ENCODE measurements at regions of chr20 and their contacts with region 1.

Region 1: DNA sequence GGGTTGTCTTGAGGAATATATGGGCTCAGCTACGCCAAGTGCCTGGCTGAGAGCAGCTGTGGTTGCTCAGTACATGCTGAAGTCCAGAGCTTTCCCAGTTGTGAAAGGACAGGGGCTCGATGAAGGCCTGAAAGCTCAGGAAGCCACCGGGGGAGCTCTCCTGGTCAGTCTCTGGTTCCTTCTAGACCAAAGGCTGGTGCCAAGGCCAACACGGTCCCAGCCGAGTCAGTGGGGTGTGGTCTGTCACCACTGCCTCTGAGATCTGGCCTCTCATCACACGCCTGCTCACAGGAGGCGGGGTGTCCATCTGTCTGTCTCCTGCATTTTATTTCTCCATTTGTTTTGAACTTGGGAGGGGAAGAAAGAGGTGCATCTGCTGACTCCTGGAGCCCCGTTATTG is 4.9 kb upstream of the FAM83C start:
- DNase-seq: peak in 1 of 2 experiments; percentile 40
- ATAC-seq: peak; percentile 52 to 67; a peak in 5 of 6 replicates
- H3K4me3 ChIP-seq: no peak overlapping the region
- H3K27ac ChIP-seq: no peak overlapping the region
- H3K4me1 ChIP-seq: peaks cover 5% of the 10 kb centered on the region; the same call in 2 of the 3 replicates
- CTCF ChIP-seq: no peak
- EP300 ChIP-seq: no peak
- POLR2A ChIP-seq: no peak
- RAD21 ChIP-seq: no peak

Region 2: GRCh38 chr20:35284267-35284991 is 12.7 kb before region 1 on chr20 and contains the start of gene EIF6:
- CTCF ChIA-PET with region 1: interaction called, 138 read pairs
- POLR2A ChIA-PET with region 1: interaction called, 4 read pairs
- DNase-seq: peak; percentile 90 to 91
- ATAC-seq: peak; percentile 91 to 93
- H3K4me3 ChIP-seq: peak within 1 kb of the TSS; percentile 91
- H3K27ac ChIP-seq: peak within 1 kb of the TSS; percentile 82 to 98
- H3K4me1 ChIP-seq: peaks cover 27% of the 10 kb centered on the region
- CTCF ChIP-seq: no peak; the same call in 2 of the 3 replicates
- EP300 ChIP-seq: no peak
- POLR2A ChIP-seq: peak; percentile 53
- RAD21 ChIP-seq: no peak
- polyA plus RNA-seq, gene EIF6: 184 and 204 TPM in 2 replicates

Measured in A549 (cell line).